PC-3 (cell line): ENCODE measurements at regions of chr14 and their contacts with region 1.

Region 1: GRCh38 chr14:66403183-66403582 is 83.0 kb upstream of the CCDC196 start:
- DNase-seq: peak; percentile 70
- ATAC-seq: peak; percentile 88
- H3K4me3 ChIP-seq: no peak overlapping the region
- H3K27ac ChIP-seq: no peak overlapping the region
- H3K4me1 ChIP-seq: no peaks in the 10 kb centered on the region
- H3K27me3 ChIP-seq: no peaks in the 10 kb centered on the region
- CTCF ChIP-seq: peak; percentile 80

Region 2: DNA sequence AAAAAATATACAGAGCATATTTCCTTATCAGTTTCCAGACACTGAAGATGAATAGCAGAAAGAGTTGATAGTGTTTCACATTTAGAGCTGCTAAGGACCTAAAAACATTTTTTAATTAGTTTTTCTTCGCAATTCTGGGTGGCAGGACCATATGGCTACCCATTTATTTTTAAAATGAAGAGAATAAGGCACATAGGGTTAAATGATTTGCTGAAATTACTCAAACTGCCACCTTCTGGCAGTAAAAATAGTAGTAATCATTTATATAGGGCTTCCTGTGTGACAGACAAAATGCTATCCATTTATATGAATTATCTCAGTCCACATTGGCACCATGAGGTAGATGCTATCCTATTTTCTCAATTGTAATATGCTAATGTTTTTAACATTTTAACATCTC is 25.6 kb before region 1 on chr14:
- CTCF ChIA-PET with region 1: no interaction called
- POLR2A ChIA-PET with region 1: no interaction called
- intact Hi-C with region 1: no loop called
- DNase-seq: no peak
- ATAC-seq: no peak
- H3K4me3 ChIP-seq: no peak overlapping the region
- H3K27ac ChIP-seq: no peak overlapping the region
- H3K4me1 ChIP-seq: 0 out of 2 replicates have a peak, but pooled peaks cover 4% of the 10 kb centered on the region
- H3K27me3 ChIP-seq: peaks cover 7% of the 10 kb centered on the region; the same call in 1 of the 2 replicates
- CTCF ChIP-seq: peak; percentile 33; the same call in 1 of the 2 replicates

Region 3: DNA sequence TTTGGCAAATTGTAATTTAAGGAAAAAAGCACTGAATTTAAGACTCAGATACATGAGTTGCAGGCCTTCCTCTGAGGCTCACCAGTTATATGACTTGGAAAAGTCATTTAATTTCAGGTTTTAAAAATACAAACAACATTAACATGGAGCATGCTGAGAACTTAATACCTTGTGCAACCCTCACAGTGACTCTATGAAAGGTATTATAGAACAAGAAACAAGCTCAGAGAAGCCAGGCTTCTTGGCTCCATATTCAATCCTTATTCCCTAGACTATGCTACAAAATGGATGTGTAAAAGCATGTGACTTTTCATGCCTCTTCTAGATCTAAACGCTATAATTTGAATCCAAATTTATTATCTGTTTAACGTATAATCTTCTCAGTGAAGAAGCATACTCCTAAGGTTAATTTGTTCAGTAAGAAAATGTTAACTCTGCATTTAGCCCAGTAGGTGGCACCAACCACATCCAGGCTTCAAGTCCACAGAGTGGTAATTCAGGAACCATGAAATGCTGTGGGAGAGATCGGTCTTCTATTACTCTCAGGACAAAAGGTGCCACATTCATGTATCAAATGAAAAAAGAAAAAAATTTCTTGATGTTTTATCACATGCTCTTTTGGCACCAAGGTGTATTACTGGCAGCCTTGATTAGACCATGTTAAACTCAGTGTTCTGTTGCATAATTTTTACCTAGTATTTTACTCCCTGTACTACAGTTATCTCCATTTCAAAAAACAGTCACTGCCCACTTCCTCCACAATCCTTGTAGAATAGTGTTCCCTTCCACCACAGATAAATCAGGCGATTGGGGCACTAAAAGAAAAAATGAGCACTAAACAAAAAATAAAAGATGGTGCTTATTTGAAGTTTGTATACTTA is 92.3 kb after region 1 on chr14:
- CTCF ChIA-PET with region 1: no interaction called
- POLR2A ChIA-PET with region 1: no interaction called
- intact Hi-C with region 1: loop called (anchors 1 kb)
- DNase-seq: peak; percentile 70
- ATAC-seq: peak; percentile 99
- H3K4me3 ChIP-seq: peak overlapping the region; percentile 16; the same call in 1 of the 2 replicates
- H3K27ac ChIP-seq: no peak overlapping the region
- H3K4me1 ChIP-seq: no peaks in the 10 kb centered on the region
- H3K27me3 ChIP-seq: no peaks in the 10 kb centered on the region
- CTCF ChIP-seq: peak; percentile 90

Region 4: DNA sequence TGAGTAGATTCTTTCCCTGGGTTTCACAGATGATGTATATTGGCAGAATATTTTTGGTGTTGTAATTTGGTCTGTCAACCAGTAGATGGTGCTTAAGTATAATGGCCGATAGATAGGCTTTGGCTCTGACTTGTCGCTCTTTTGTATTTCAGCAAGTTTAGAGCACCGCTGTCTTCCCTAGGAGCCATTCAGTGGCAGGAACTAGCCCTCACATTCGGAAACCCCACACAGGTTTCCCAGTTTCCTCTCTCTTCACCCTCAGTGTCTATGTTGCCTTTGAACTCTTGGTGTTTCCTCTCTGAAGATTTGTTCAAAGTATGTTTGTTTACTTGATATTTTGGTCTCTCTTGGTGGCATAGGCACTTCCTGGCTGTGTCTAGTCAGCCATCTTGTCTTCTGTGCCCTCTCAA is 207.0 kb after region 1 on chr14:
- CTCF ChIA-PET with region 1: no interaction called
- POLR2A ChIA-PET with region 1: no interaction called
- intact Hi-C with region 1: loop called (anchors 5 kb)
- DNase-seq: peak; percentile 72
- ATAC-seq: peak; percentile 94
- H3K4me3 ChIP-seq: no peak overlapping the region; the same call in 1 of the 2 replicates
- H3K27ac ChIP-seq: no peak overlapping the region
- H3K4me1 ChIP-seq: no peaks in the 10 kb centered on the region
- H3K27me3 ChIP-seq: no peaks in the 10 kb centered on the region
- CTCF ChIP-seq: peak; percentile 80

Region 5: GRCh38 chr14:66859063-66859671 is 456.0 kb after region 1 on chr14:
- CTCF ChIA-PET with region 1: no interaction called
- POLR2A ChIA-PET with region 1: no interaction called
- intact Hi-C with region 1: loop called (anchors 10 kb)
- DNase-seq: no peak
- ATAC-seq: no peak
- H3K4me3 ChIP-seq: no peak overlapping the region
- H3K27ac ChIP-seq: no peak overlapping the region
- H3K4me1 ChIP-seq: no peaks in the 10 kb centered on the region
- H3K27me3 ChIP-seq: no peaks in the 10 kb centered on the region
- CTCF ChIP-seq: no peak